Naive thymus-derived CD4-positive, alpha-beta T cell (primary cell): ENCODE measurements at regions of chr4 and their contacts with region 1.

Region 1: GRCh38 chr4:40455340-40455902 is 120.3 kb downstream of the CHRNA9 start:
- DNase-seq: no peak
- ATAC-seq: no peak
- H3K4me3 ChIP-seq: no peak overlapping the region
- H3K4me3 Mint-ChIP-seq: no peak overlapping the region
- H3K27ac ChIP-seq: no peak overlapping the region
- H3K27ac Mint-ChIP-seq: no peak overlapping the region
- H3K4me1 ChIP-seq: no peaks in the 10 kb centered on the region
- H3K4me1 Mint-ChIP-seq: peaks cover 6 to 24% (median 14%) of the 10 kb centered on the region in 7 donors
- H3K27me3 ChIP-seq: no peaks in the 10 kb centered on the region
- H3K27me3 Mint-ChIP-seq: no peaks in the 10 kb centered on the region

Region 2: DNA sequence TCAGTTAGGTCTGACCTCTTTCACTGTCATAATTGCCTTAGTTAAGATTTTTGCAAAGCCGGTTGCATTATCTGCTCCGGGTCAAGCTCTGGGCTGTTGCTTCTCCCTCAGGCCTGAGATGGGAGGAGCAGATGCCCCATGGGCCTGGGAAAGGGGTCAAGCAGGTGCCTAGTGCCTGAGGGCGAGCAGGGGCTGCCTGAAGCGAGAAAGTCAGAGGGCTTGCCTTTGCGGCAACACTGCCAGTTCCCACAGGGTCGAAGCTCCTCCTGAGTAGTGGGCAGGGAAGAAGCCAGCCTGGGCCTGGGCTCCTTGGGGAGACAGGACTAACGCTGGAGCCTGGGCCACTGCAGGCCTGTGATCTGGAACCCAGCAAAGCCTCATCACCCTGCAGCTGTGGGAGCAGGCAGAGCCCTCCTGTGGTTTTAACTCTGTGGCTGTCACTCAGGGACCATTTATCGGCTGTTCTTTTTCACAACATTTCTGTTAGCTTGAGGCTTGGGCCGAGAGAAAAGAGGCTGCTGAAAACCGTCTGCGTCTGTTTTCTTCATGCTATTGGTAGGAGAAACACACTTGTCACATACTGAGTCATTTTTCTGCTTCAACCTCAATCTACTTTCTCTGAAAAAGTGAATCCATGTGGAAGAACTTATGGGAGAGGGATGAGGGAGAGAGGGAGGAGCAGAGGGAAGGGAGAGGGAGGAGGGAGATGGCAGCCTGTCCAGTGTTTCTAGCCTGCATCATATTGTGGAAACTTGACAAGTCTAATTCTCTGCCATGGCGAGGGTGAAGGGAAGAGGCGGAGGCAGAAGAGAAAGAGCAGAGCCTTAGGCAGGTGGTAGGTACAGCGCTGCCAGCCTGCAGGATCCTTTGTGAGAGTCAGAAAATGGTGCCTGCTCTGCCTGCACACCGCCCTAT is 190.2 kb before region 1 on chr4:
- CTCF ChIA-PET with region 1: no interaction called
- POLR2A ChIA-PET with region 1: no interaction called
- intact Hi-C with region 1: no loop called
- DNase-seq: peak in 5 of 9 donors; percentile 43 to 58 (median 51)
- ATAC-seq: peak; percentile 87
- H3K4me3 ChIP-seq: peak overlapping the region; percentile 22
- H3K4me3 Mint-ChIP-seq: peak overlapping the region; percentile 72 to 89 (median 81)
- H3K27ac ChIP-seq: peak overlapping the region; percentile 77
- H3K27ac Mint-ChIP-seq: peak overlapping the region; percentile 80 to 99 (median 97)
- H3K4me1 ChIP-seq: peaks cover 31 to 53% of the 10 kb centered on the region in 2 donors
- H3K4me1 Mint-ChIP-seq: peaks cover 33 to 88% (median 78%) of the 10 kb centered on the region in 7 donors
- H3K27me3 ChIP-seq: no peaks in the 10 kb centered on the region
- H3K27me3 Mint-ChIP-seq: no peaks in the 10 kb centered on the region

Region 3: GRCh38 chr4:40432504-40432903 is 22.9 kb before region 1 on chr4:
- CTCF ChIA-PET with region 1: no interaction called
- POLR2A ChIA-PET with region 1: no interaction called
- intact Hi-C with region 1: loop called (anchors 1 to 2 kb)
- DNase-seq: no peak
- ATAC-seq: no peak
- H3K4me3 ChIP-seq: no peak overlapping the region
- H3K4me3 Mint-ChIP-seq: peak overlapping the region in 6 of 10 donors; percentile 11 to 62 (median 51)
- H3K27ac ChIP-seq: peak overlapping the region; percentile 61
- H3K27ac Mint-ChIP-seq: peak overlapping the region; percentile 83 to 99 (median 89)
- H3K4me1 ChIP-seq: peaks cover 0 to 29% of the 10 kb centered on the region in 2 donors
- H3K4me1 Mint-ChIP-seq: peaks cover 11 to 60% (median 42%) of the 10 kb centered on the region in 7 donors
- H3K27me3 ChIP-seq: no peaks in the 10 kb centered on the region
- H3K27me3 Mint-ChIP-seq: no peaks in the 10 kb centered on the region

Region 4: GRCh38 chr4:40438384-40439026 is 16.9 kb before region 1 on chr4:
- CTCF ChIA-PET with region 1: no interaction called
- POLR2A ChIA-PET with region 1: interaction called, 3 read pairs
- intact Hi-C with region 1: loop called (anchors 1 to 2 kb)
- DNase-seq: no peak
- ATAC-seq: no peak
- H3K4me3 ChIP-seq: no peak overlapping the region
- H3K4me3 Mint-ChIP-seq: peak overlapping the region in 9 of 10 donors; percentile 0 to 67 (median 47)
- H3K27ac ChIP-seq: peak overlapping the region; percentile 25
- H3K27ac Mint-ChIP-seq: peak overlapping the region in 6 of 9 donors; percentile 17 to 88 (median 74)
- H3K4me1 ChIP-seq: peaks cover 0 to 20% of the 10 kb centered on the region in 2 donors
- H3K4me1 Mint-ChIP-seq: peaks cover 3 to 62% (median 45%) of the 10 kb centered on the region in 7 donors
- H3K27me3 ChIP-seq: no peaks in the 10 kb centered on the region
- H3K27me3 Mint-ChIP-seq: peaks cover 0 to 3% (median 0%) of the 10 kb centered on the region in 5 donors

Region 5: GRCh38 chr4:40843696-40844095 is 388.3 kb after region 1 on chr4:
- CTCF ChIA-PET with region 1: no interaction called
- POLR2A ChIA-PET with region 1: no interaction called
- intact Hi-C with region 1: no loop called
- DNase-seq: peak in 3 of 9 donors; percentile 14 to 35 (median 24)
- ATAC-seq: peak; percentile 68
- H3K4me3 ChIP-seq: no peak overlapping the region
- H3K4me3 Mint-ChIP-seq: no peak overlapping the region
- H3K27ac ChIP-seq: no peak overlapping the region
- H3K27ac Mint-ChIP-seq: no peak overlapping the region
- H3K4me1 ChIP-seq: no peaks in the 10 kb centered on the region
- H3K4me1 Mint-ChIP-seq: peaks cover 0 to 5% (median 0%) of the 10 kb centered on the region in 7 donors
- H3K27me3 ChIP-seq: no peaks in the 10 kb centered on the region
- H3K27me3 Mint-ChIP-seq: peaks cover 0 to 17% (median 0%) of the 10 kb centered on the region in 5 donors